MCF 10A (cell line): ENCODE measurements at regions of chr11 and their contacts with region 1.

Region 1: DNA sequence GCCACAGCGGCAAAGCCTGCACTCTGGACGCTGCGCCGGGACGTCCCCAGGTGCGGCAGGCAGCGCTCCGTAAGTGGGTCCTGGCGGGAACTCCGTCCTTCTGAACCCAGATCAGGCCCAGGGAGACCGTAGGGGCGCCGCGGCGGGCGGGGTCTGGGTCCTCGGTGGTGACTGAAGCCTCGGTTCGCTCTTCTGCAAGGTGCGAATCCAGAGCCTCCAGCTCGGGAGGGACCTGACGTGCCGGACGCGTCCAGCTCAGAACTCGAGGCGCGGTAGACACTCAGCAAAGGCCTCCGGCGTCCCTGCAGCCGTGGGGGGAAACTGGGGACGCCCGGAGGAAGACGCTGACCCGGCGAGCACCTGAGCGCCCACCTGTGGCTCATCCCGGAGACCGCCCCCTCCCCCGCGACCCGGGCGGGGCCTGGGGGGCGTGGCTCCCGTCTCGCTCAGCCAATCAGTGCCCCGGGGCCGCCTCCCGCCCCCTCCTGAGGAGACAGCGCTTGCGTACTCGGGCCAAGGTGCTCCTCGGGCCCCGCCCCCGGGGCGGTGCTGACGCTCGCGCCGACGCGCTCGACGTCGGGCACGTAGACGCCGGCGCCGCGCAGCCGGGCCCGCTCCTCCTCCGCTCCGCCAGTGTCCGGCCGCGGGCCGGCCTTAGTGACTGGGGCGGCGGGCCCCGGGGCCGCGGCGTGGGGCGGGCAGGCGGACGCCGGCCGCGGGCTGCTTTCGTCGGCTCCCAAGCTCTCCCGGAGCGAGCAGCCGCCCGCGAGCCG is at the start of gene PPFIA1:
- DNase-seq: peak; percentile 95
- H3K4me3 Mint-ChIP-seq: peak within 1 kb of the TSS; percentile 85
- H3K27ac Mint-ChIP-seq: peak within 1 kb of the TSS; percentile 88
- H3K4me1 Mint-ChIP-seq: peaks cover 18% of the 10 kb centered on the region
- H3K27me3 Mint-ChIP-seq: no peaks in the 10 kb centered on the region
- CTCF ChIP-seq: no peak
- total RNA-seq, gene PPFIA1: 78.4 and 78.8 TPM in 2 replicates

Region 2: GRCh38 chr11:70233034-70233995 is 37.0 kb before region 1 on chr11:
- CTCF ChIA-PET with region 1: no interaction called
- POLR2A ChIA-PET with region 1: interaction called, 20 read pairs
- intact Hi-C with region 1: loop called (anchors 1 kb)
- DNase-seq: peak; percentile 99
- H3K4me3 Mint-ChIP-seq: peak overlapping the region; percentile 44
- H3K27ac Mint-ChIP-seq: peak overlapping the region; percentile 85
- H3K4me1 Mint-ChIP-seq: peaks cover 16% of the 10 kb centered on the region
- H3K27me3 Mint-ChIP-seq: no peaks in the 10 kb centered on the region
- CTCF ChIP-seq: no peak

Region 3: GRCh38 chr11:70244698-70245097 is 25.6 kb before region 1 on chr11:
- CTCF ChIA-PET with region 1: no interaction called
- POLR2A ChIA-PET with region 1: interaction called, 8 read pairs
- intact Hi-C with region 1: loop called (anchors 1 kb)
- DNase-seq: peak; percentile 84
- H3K4me3 Mint-ChIP-seq: no peak overlapping the region
- H3K27ac Mint-ChIP-seq: peak overlapping the region; percentile 79
- H3K4me1 Mint-ChIP-seq: peaks cover 41% of the 10 kb centered on the region
- H3K27me3 Mint-ChIP-seq: no peaks in the 10 kb centered on the region
- CTCF ChIP-seq: no peak

Region 4: DNA sequence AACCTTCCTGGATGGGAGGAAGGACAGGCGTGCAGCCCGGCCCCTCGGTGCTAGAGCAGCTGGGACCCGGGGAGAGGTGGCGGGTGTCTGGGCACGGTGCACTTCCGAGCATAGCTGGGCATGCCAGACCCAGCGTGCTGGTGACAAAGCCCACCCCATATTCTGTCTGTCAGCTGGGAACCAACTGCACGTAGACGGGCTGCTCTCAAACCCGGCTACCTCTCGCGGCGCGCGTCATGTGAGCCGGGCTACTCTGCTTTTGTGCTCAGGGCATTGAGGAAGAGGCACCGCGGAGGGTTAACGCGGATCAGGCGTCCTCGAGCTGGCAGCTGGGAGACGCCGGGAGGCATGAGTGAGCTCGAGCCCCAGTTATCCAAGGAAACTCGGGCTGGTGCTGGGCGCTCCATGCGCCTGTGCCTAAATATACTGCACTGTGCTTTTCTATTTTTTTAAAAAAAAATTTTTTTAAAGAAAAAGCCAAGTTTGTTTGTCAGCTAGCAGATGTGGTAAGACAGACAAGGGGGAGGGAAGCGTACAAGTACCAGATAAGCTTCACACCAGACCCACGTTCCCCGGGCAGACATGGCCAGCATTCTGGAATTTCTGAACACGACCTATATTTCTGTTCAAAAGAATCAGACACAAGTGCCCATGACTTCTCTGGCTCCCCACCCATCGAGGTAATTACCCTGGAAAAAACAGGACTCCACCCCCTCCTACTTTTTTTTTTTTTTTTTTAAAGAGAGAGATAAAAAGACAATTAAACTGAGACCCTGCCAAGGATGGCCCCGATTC is 556.4 kb after region 1 on chr11:
- CTCF ChIA-PET with region 1: no interaction called
- POLR2A ChIA-PET with region 1: no interaction called
- intact Hi-C with region 1: no loop called
- DNase-seq: no peak
- H3K4me3 Mint-ChIP-seq: no peak overlapping the region
- H3K27ac Mint-ChIP-seq: no peak overlapping the region
- H3K4me1 Mint-ChIP-seq: no peaks in the 10 kb centered on the region
- H3K27me3 Mint-ChIP-seq: no peaks in the 10 kb centered on the region
- CTCF ChIP-seq: no peak